ENCODE measurements at regions of chr9 and their contacts with region 1.

Region 1: DNA sequence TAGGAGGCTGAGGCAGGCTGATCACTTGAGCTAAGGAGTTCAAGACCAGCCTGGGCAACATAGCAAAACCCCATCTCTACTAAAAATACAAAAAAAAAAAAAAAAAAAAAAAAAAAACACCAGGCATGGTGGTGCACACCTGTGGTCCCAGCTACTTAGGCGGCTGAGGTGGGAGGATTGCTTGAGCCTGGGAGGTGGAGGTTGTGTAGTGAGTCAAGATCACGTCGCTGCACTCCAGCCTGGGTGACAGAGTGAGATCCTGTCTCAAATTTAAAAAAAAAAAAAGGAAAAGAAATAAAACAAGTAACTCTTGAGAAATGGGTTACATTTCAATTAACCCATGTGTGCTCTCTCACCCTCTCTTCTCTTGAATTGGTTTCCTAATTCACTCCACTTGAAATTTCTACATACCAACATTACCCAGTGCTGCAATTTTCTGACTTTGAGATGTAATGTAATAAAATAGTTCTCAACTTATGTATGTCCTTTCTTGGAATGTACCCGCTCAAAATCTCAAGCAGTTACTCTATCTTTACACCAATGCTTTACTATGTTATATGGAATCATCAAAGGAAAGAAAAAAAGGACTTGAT is 35.8 kb downstream of the TMEM245 start:
- DNase-seq: no peak
- H3K4me3 ChIP-seq: no peak overlapping the region
- H3K4me3 Mint-ChIP-seq: no peak overlapping the region
- H3K27ac Mint-ChIP-seq: no peak overlapping the region
- H3K4me1 ChIP-seq: peaks cover 91% of the 10 kb centered on the region
- H3K4me1 Mint-ChIP-seq: peaks cover 56% of the 10 kb centered on the region
- H3K27me3 ChIP-seq: no peaks in the 10 kb centered on the region
- H3K27me3 Mint-ChIP-seq: no peaks in the 10 kb centered on the region
- CTCF ChIP-seq: no peak

Region 2: DNA sequence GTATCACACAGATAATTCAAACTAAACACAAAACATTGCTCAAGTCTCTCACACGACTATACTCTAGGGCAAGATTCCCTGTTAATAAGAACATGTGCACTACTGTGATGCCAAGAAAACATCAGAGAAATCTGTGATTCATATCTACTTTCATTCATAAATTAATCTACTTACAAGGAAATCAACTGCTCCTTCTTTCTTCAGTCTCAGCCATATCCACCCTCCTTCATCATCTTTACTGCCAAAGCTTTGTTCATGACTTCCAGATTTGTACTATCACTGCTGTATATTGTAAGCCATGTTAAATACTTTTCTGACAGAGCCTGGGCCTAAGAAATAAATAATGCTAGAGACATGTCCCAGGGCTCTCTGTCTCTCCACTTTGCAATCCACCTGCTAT is 105.7 kb before region 1 on chr9:
- CTCF ChIA-PET with region 1: no interaction called
- POLR2A ChIA-PET with region 1: no interaction called
- intact Hi-C with region 1: no loop called
- DNase-seq: no peak
- H3K4me3 ChIP-seq: no peak overlapping the region
- H3K4me3 Mint-ChIP-seq: no peak overlapping the region
- H3K27ac Mint-ChIP-seq: no peak overlapping the region
- H3K4me1 ChIP-seq: no peaks in the 10 kb centered on the region
- H3K4me1 Mint-ChIP-seq: no peaks in the 10 kb centered on the region
- H3K27me3 ChIP-seq: no peaks in the 10 kb centered on the region
- H3K27me3 Mint-ChIP-seq: no peaks in the 10 kb centered on the region
- CTCF ChIP-seq: no peak

Region 3: GRCh38 chr9:109063760-109064159 is 20.1 kb before region 1 on chr9:
- CTCF ChIA-PET with region 1: no interaction called
- POLR2A ChIA-PET with region 1: no interaction called
- intact Hi-C with region 1: loop called (anchors 1 kb)
- DNase-seq: no peak
- H3K4me3 ChIP-seq: no peak overlapping the region
- H3K4me3 Mint-ChIP-seq: peak overlapping the region; percentile 1
- H3K27ac Mint-ChIP-seq: peak overlapping the region; percentile 46
- H3K4me1 ChIP-seq: peaks cover 49% of the 10 kb centered on the region
- H3K4me1 Mint-ChIP-seq: peaks cover 19% of the 10 kb centered on the region
- H3K27me3 ChIP-seq: no peaks in the 10 kb centered on the region
- H3K27me3 Mint-ChIP-seq: no peaks in the 10 kb centered on the region
- CTCF ChIP-seq: no peak

Region 4: GRCh38 chr9:109100543-109101201 is 16.8 kb after region 1 on chr9:
- CTCF ChIA-PET with region 1: no interaction called
- POLR2A ChIA-PET with region 1: no interaction called
- intact Hi-C with region 1: loop called (anchors 1 kb)
- DNase-seq: no peak
- H3K4me3 ChIP-seq: no peak overlapping the region
- H3K4me3 Mint-ChIP-seq: no peak overlapping the region
- H3K27ac Mint-ChIP-seq: no peak overlapping the region
- H3K4me1 ChIP-seq: peaks cover 68% of the 10 kb centered on the region
- H3K4me1 Mint-ChIP-seq: peaks cover 60% of the 10 kb centered on the region
- H3K27me3 ChIP-seq: no peaks in the 10 kb centered on the region
- H3K27me3 Mint-ChIP-seq: no peaks in the 10 kb centered on the region
- CTCF ChIP-seq: no peak

Region 5: DNA sequence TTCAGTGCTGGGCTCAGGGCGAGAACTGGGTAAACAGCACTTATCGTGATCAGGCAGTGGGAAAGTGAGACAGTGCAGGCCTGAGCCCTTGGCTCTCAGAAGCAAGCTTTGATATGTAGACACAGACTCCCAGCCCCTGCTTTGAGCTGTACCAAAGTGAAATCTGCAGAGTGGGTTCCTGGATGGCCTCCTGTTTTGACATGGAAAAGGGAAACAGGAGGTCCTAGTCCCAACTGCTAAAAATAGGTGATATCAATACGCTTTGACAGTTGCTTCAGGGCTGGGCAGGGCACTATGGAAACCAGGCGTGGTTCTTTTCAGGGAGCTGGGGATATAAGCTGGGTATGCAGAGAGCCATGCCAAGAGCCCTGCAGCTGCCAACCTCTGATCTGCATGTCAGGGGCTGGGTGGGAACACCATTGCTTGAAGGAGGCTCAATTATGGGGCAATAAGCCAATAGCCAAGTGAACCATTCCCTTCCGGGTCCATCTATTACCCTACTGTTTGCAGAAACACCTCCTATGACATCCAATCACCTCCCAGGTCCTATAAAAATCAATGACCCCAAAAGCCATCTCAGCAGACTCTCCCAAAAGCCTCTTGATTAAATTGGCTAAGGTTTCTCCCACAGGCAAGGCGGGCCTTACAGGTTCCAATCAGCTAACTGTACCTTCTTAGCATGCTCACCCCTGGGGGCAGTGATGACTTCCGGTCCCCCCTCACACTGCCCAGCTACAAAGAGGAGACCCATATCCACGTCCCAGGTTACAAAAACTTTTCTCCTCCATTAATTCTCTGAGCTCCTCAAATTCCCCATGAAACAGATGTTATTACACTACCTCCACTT is 191.2 kb after region 1 on chr9:
- CTCF ChIA-PET with region 1: no interaction called
- POLR2A ChIA-PET with region 1: no interaction called
- intact Hi-C with region 1: no loop called
- DNase-seq: no peak
- H3K4me3 ChIP-seq: no peak overlapping the region
- H3K4me3 Mint-ChIP-seq: no peak overlapping the region
- H3K27ac Mint-ChIP-seq: no peak overlapping the region
- H3K4me1 ChIP-seq: 0 out of 2 replicates have a peak, but pooled peaks cover 8% of the 10 kb centered on the region
- H3K4me1 Mint-ChIP-seq: peaks cover 9% of the 10 kb centered on the region
- H3K27me3 ChIP-seq: no peaks in the 10 kb centered on the region
- H3K27me3 Mint-ChIP-seq: no peaks in the 10 kb centered on the region
- CTCF ChIP-seq: no peak

Measured in Caco-2 (cell line).